Endothelial cell of umbilical vein (primary cell): ENCODE measurements at regions of chr2 and their contacts with region 1.

Region 1: DNA sequence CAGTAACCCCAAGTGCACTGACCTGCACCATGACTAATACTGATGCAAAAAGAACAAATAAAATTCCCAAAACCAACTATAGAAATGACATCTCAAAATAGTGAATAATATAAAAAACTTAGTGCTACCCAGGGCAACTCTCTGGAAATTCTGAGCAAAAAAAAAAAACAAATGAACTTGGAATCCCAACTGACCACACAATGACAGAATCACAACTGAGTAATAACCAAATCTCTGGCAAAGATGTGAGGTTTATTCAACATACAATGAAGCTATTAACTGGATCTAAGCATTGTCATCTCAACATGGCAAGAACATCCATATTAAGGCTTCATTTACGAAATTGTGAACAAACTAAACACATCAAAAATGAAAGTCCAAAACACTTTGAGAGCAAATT is 22.7 kb downstream of the EXOC6B start:
- DNase-seq: no peak
- H3K4me3 ChIP-seq: no peak overlapping the region
- H3K27ac ChIP-seq: no peak overlapping the region
- H3K4me1 ChIP-seq: no peaks in the 10 kb centered on the region
- H3K27me3 ChIP-seq: no peaks in the 10 kb centered on the region
- CTCF ChIP-seq: no peak
- POLR2A ChIP-seq: no peak

Region 2: DNA sequence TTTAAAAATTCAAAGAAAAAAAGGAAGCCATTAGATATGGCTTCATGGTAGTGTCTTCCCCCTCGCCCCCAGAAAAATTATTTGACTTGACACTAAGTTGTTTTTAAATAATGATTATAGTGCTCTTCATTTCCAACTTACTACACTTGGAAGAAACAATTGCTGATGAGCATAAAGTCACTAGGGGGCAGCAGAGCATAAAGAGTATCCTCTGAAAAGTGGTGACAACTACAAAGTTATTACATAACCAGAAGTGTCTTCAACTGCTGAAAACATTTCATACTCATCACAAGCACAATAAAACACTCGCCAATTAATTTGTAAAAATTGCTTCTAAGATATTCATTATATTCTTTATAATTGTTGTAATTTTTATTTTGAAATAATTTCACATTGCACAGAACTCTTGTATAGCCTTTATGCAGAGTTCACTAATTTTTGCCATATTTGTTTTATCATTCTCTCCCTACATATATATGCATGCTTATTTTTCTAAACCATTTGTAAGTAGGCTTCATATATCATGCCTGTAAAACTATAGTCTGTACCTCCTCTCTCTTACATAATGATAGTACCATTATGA is 32.2 kb before region 1 on chr2:
- CTCF ChIA-PET with region 1: interaction called, 15 read pairs
- POLR2A ChIA-PET with region 1: no interaction called
- dilution Hi-C with region 1: no loop called
- intact Hi-C with region 1: no loop called
- DNase-seq: peak; percentile 84
- H3K4me3 ChIP-seq: no peak overlapping the region
- H3K27ac ChIP-seq: no peak overlapping the region
- H3K4me1 ChIP-seq: no peaks in the 10 kb centered on the region
- H3K27me3 ChIP-seq: no peaks in the 10 kb centered on the region
- CTCF ChIP-seq: peak; percentile 54 to 71
- POLR2A ChIP-seq: no peak

Region 3: DNA sequence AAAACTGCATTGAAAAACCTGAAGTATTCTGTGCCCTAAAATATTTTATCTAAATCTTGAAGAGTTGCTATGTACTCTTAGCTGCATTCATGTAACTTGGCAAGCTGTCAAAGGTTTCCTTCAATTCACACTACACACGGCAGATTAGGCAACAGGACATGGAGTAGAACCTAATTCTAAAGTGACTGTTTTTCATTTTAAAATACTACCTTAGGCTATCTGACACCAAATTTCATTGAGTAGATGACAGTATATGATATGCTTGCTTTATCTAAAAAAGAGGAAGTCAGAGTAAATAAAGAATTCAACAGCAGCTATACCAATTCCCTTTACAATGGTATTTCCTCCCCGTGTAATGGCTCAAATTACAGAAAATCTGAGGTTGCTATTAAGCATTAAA is 22.7 kb before region 1 on chr2:
- CTCF ChIA-PET with region 1: interaction called, 13 read pairs
- POLR2A ChIA-PET with region 1: no interaction called
- dilution Hi-C with region 1: no loop called
- intact Hi-C with region 1: no loop called
- DNase-seq: peak; percentile 84
- H3K4me3 ChIP-seq: no peak overlapping the region
- H3K27ac ChIP-seq: peak overlapping the region; percentile 5
- H3K4me1 ChIP-seq: peaks cover 38% of the 10 kb centered on the region
- H3K27me3 ChIP-seq: no peaks in the 10 kb centered on the region
- CTCF ChIP-seq: no peak
- POLR2A ChIP-seq: no peak